Naive thymus-derived CD4-positive, alpha-beta T cell (primary cell): ENCODE measurements at regions of chr12 and their contacts with region 1.

Region 1: GRCh38 chr12:124906606-124907261 is 7.7 kb downstream of the UBC start:
- DNase-seq: peak; percentile 49 to 92 (median 89)
- ATAC-seq: peak; percentile 90
- H3K4me3 ChIP-seq: no peak overlapping the region
- H3K4me3 Mint-ChIP-seq: peak overlapping the region in 1 of 10 donors; percentile 4
- H3K27ac ChIP-seq: no peak overlapping the region
- H3K27ac Mint-ChIP-seq: peak overlapping the region in 8 of 9 donors; percentile 1 to 67 (median 36)
- H3K4me1 ChIP-seq: peaks cover 4 to 10% of the 10 kb centered on the region in 2 donors
- H3K4me1 Mint-ChIP-seq: peaks cover 21 to 33% (median 27%) of the 10 kb centered on the region in 7 donors
- H3K27me3 ChIP-seq: no peaks in the 10 kb centered on the region
- H3K27me3 Mint-ChIP-seq: no peaks in the 10 kb centered on the region

Region 2: GRCh38 chr12:124863416-124864325 is 43.1 kb before region 1 on chr12 and contains the start of gene SCARB1:
- CTCF ChIA-PET with region 1: no interaction called
- POLR2A ChIA-PET with region 1: no interaction called
- intact Hi-C with region 1: loop called in 1 of 2 experiments (anchors 2 kb)
- DNase-seq: peak; percentile 60 to 84 (median 72)
- ATAC-seq: peak; percentile 95
- H3K4me3 ChIP-seq: peak within 1 kb of the TSS; percentile 74
- H3K4me3 Mint-ChIP-seq: peak within 1 kb of the TSS; percentile 70 to 94 (median 81)
- H3K27ac ChIP-seq: peak within 1 kb of the TSS; percentile 58
- H3K27ac Mint-ChIP-seq: peak within 1 kb of the TSS; percentile 66 to 94 (median 83)
- H3K4me1 ChIP-seq: no peaks in the 10 kb centered on the region
- H3K4me1 Mint-ChIP-seq: peaks cover 9 to 25% (median 14%) of the 10 kb centered on the region in 7 donors
- H3K27me3 ChIP-seq: no peaks in the 10 kb centered on the region
- H3K27me3 Mint-ChIP-seq: peaks cover 0 to 8% (median 3%) of the 10 kb centered on the region in 5 donors
- total RNA-seq, gene SCARB1: 2.5 to 7.1 (median 4.3) TPM

Region 3: DNA sequence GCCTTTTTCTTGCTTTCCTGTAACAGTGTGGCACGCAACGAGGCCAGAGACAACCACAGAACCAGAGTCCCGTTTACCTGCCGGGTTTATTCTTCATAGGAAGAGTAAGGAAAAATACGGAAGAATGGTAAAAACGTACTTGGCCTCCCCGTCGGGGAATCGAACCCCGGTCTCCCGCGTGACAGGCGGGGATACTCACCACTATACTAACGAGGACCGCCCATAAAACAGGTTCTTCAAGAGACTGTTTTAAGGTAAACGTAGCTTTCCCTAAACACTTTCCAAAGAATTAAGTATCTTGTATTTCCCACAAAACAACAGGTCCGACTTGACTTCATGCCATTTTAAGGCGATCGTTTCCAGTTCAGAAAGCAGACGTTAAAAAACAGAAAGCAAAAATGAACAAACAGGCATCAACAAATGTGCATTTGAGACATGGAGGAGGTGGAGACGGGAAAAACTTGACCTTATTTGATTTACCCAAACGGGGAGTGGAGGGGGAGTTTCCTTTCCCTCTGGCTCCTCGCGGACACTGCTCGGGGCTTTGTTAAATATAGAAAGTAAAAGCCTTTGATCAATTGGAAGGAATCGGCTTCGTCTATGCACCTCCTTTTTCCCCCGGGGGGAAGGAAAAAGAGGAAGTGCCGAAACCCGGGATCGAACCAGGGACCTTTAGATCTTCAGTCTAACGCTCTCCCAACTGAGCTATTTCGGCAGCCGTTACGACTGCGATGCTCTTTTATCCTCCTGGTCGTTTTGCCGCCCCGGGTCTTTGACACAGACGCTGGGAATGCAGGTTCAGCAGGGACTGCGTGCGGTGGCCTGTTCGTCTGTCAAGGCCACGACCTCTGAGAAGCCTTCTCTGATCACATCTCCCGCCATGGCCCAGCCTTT is 20.7 kb after region 1 on chr12:
- CTCF ChIA-PET with region 1: interaction called, 18 read pairs
- POLR2A ChIA-PET with region 1: interaction called, 158 read pairs
- intact Hi-C with region 1: loop called in 1 of 2 experiments (anchors 1 kb)
- DNase-seq: peak; percentile 86 to 95 (median 92)
- ATAC-seq: peak; percentile 93
- H3K4me3 ChIP-seq: peak overlapping the region; percentile 91
- H3K4me3 Mint-ChIP-seq: peak overlapping the region; percentile 84 to 97 (median 93)
- H3K27ac ChIP-seq: peak overlapping the region; percentile 65
- H3K27ac Mint-ChIP-seq: peak overlapping the region; percentile 90 to 100 (median 98)
- H3K4me1 ChIP-seq: peaks cover 15 to 18% of the 10 kb centered on the region in 2 donors
- H3K4me1 Mint-ChIP-seq: peaks cover 18 to 37% (median 32%) of the 10 kb centered on the region in 7 donors
- H3K27me3 ChIP-seq: no peaks in the 10 kb centered on the region
- H3K27me3 Mint-ChIP-seq: peaks cover 0 to 9% (median 0%) of the 10 kb centered on the region in 5 donors

Region 4: DNA sequence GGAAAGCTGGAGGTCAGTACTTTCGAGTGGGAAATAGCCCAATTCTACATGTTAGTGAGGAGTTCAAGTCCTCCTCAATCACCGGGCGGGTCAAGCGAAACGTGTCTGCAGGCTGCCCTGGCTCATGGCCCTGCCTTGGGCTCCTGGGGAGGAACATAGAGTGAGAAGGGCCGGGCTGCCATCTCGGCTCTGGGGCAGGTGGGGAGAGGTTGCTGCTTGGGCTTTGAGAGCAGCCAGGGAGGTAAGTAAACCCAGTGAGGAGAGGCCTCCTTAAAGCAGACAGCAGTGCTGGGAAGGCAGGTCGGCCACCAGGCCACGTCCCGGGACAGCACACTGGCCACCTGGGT is 39.7 kb after region 1 on chr12:
- CTCF ChIA-PET with region 1: interaction called, 167 read pairs
- POLR2A ChIA-PET with region 1: interaction called, 62 read pairs
- intact Hi-C with region 1: no loop called
- DNase-seq: no peak
- ATAC-seq: no peak
- H3K4me3 ChIP-seq: no peak overlapping the region
- H3K4me3 Mint-ChIP-seq: no peak overlapping the region
- H3K27ac ChIP-seq: no peak overlapping the region
- H3K27ac Mint-ChIP-seq: peak overlapping the region in 1 of 9 donors; percentile 0
- H3K4me1 ChIP-seq: no peaks in the 10 kb centered on the region
- H3K4me1 Mint-ChIP-seq: peaks cover 0 to 3% (median 0%) of the 10 kb centered on the region in 7 donors
- H3K27me3 ChIP-seq: no peaks in the 10 kb centered on the region
- H3K27me3 Mint-ChIP-seq: no peaks in the 10 kb centered on the region

Region 5: DNA sequence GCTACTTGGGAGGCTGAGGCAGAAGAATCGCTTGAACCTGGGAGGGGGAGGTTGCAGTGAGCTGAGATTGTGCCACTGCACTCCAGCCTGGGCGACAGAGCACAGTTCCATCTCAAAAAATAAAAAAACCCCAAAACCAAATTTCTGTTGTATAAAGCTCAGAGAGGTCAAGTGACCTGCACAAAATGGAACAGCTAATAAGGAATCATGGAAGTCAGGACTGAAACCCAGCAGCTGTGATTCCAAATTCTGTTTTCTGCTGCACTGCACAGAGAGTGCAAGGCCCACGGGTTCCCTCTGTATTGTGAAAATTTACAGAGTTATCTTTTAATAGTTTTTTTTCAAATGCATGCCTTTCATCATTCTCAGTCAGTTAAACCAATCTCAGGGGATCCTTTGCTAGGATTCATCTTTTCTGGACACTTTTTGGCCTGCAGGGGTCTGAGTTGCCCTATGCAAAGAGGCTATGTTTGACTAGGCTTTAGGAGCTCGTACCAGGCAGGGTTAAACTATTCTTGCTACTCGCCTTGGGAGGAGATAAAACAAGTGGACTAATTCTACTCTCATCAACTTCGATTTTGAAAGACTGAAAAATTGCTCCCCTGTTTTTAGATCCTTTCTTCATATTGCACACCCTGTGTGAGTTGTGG is 132.4 kb after region 1 on chr12:
- CTCF ChIA-PET with region 1: no interaction called
- POLR2A ChIA-PET with region 1: no interaction called
- intact Hi-C with region 1: no loop called
- DNase-seq: no peak
- ATAC-seq: no peak
- H3K4me3 ChIP-seq: no peak overlapping the region
- H3K4me3 Mint-ChIP-seq: no peak overlapping the region
- H3K27ac ChIP-seq: no peak overlapping the region
- H3K27ac Mint-ChIP-seq: no peak overlapping the region
- H3K4me1 ChIP-seq: no peaks in the 10 kb centered on the region
- H3K4me1 Mint-ChIP-seq: no peaks in the 10 kb centered on the region
- H3K27me3 ChIP-seq: no peaks in the 10 kb centered on the region
- H3K27me3 Mint-ChIP-seq: no peaks in the 10 kb centered on the region

Region 6: DNA sequence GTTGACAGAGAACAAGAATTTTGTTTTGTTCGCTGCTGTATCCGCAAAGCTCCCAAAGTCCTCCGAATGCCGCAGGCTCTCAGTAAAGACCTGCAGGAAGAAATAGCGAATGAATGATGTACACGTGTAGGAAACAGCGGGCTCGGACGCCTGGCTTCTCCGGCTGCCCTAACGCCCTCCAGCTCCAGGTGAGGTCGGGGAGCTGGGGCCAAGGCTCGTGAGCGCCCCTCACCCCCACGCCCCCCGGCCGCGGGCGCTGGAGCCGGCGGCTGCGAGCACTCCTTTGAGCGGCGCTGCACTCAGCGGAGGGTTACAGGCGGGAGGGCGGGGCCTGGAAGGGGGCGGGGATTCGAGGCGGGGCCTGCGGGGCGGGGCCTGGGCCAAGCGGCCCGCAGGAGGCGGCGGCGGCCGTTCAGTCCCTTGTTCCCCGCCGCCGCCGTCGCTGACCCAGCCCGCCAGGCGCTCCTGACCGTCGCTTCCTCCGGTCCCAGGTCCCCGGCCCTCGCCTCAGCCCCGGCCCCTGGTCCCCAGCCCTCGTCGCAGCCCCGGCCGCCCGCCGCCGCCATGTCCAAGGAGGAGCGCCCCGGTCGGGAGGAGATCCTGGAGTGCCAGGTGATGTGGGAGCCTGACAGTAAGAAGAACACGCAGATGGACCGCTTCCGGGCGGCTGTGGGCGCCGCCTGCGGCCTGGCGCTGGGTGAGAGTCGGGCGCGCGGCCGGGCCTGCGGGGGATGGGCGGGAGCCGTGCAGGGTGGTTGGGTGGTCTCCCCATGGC is 158.5 kb after region 1 on chr12 and contains the start of gene AACS:
- CTCF ChIA-PET with region 1: interaction called, 3 read pairs
- POLR2A ChIA-PET with region 1: no interaction called
- intact Hi-C with region 1: loop called (anchors 1 to 5 kb)
- DNase-seq: peak; percentile 50 to 81 (median 69)
- ATAC-seq: peak; percentile 99
- H3K4me3 ChIP-seq: peak within 1 kb of the TSS; percentile 69
- H3K4me3 Mint-ChIP-seq: peak within 1 kb of the TSS; percentile 72 to 92 (median 86)
- H3K27ac ChIP-seq: peak within 1 kb of the TSS; percentile 83
- H3K27ac Mint-ChIP-seq: peak within 1 kb of the TSS; percentile 42 to 88 (median 64)
- H3K4me1 ChIP-seq: no peaks in the 10 kb centered on the region
- H3K4me1 Mint-ChIP-seq: peaks cover 9 to 25% (median 20%) of the 10 kb centered on the region in 7 donors
- H3K27me3 ChIP-seq: no peaks in the 10 kb centered on the region
- H3K27me3 Mint-ChIP-seq: peaks cover 0 to 21% (median 3%) of the 10 kb centered on the region in 5 donors
- total RNA-seq, gene AACS: 11.6 to 21.7 (median 14.8) TPM